Caco-2 (cell line): ENCODE measurements at regions of chr5 and their contacts with region 1.

Region 1: GRCh38 chr5:40904205-40904993 is 4.9 kb upstream of the C7 start:
- DNase-seq: peak; percentile 57 to 61
- H3K4me3 ChIP-seq: no peak overlapping the region
- H3K4me3 Mint-ChIP-seq: no peak overlapping the region
- H3K27ac Mint-ChIP-seq: no peak overlapping the region
- H3K4me1 ChIP-seq: no peaks in the 10 kb centered on the region
- H3K4me1 Mint-ChIP-seq: peaks cover 9% of the 10 kb centered on the region
- H3K27me3 ChIP-seq: no peaks in the 10 kb centered on the region
- H3K27me3 Mint-ChIP-seq: peaks cover 5% of the 10 kb centered on the region
- CTCF ChIP-seq: peak; percentile 80 to 97

Region 2: DNA sequence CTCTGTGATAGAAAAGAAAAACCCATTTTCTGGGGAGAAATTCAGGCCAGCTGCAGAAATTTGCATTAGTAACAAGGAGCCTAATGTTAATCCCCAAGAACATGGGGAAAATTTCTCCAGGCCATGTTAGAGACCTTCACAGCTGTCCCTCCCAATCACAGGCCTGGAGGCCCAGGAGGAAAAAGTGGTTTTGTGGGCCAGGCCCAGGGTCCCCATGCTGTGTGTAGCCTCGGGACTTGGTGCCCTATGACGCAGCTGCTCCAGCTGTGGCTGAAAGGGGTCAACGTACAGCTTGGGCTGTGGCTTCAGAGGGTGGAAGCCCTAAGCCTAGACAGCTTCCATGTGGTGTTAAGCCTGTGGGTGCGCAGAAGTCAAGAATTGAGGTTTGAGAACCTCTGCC is 22.1 kb before region 1 on chr5:
- CTCF ChIA-PET with region 1: no interaction called
- POLR2A ChIA-PET with region 1: no interaction called
- intact Hi-C with region 1: no loop called
- DNase-seq: no peak
- H3K4me3 ChIP-seq: no peak overlapping the region
- H3K4me3 Mint-ChIP-seq: no peak overlapping the region
- H3K27ac Mint-ChIP-seq: no peak overlapping the region
- H3K4me1 ChIP-seq: no peaks in the 10 kb centered on the region
- H3K4me1 Mint-ChIP-seq: no peaks in the 10 kb centered on the region
- H3K27me3 ChIP-seq: no peaks in the 10 kb centered on the region
- H3K27me3 Mint-ChIP-seq: no peaks in the 10 kb centered on the region
- CTCF ChIP-seq: no peak

Region 3: DNA sequence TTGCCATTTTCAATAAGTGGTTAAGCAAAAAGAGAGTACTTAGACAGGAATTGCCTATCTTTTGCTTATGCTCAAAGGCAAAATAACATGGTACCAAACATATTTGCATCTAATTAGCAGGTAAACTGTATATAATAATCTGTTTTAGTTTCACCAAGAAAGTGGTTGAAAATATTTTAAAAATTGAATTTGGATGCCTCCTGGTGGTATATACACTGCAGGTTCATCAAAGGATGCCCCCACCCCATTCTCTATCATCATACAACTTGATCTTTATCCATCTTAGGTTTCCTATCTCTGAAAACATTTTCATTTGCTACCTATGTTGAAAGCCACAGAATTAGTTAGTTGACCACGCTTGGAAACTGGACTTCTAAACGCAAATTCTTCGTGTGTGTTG is 213.8 kb after region 1 on chr5:
- CTCF ChIA-PET with region 1: interaction called, 6 read pairs
- POLR2A ChIA-PET with region 1: no interaction called
- intact Hi-C with region 1: loop called (anchors 1 kb)
- DNase-seq: no peak
- H3K4me3 ChIP-seq: no peak overlapping the region
- H3K4me3 Mint-ChIP-seq: no peak overlapping the region
- H3K27ac Mint-ChIP-seq: no peak overlapping the region
- H3K4me1 ChIP-seq: no peaks in the 10 kb centered on the region
- H3K4me1 Mint-ChIP-seq: no peaks in the 10 kb centered on the region
- H3K27me3 ChIP-seq: no peaks in the 10 kb centered on the region
- H3K27me3 Mint-ChIP-seq: peaks cover 3% of the 10 kb centered on the region
- CTCF ChIP-seq: no peak

Region 4: GRCh38 chr5:41334758-41335157 is 430.4 kb after region 1 on chr5:
- CTCF ChIA-PET with region 1: no interaction called
- POLR2A ChIA-PET with region 1: no interaction called
- intact Hi-C with region 1: loop called (anchors 5 kb)
- DNase-seq: no peak
- H3K4me3 ChIP-seq: no peak overlapping the region
- H3K4me3 Mint-ChIP-seq: no peak overlapping the region
- H3K27ac Mint-ChIP-seq: no peak overlapping the region
- H3K4me1 ChIP-seq: no peaks in the 10 kb centered on the region
- H3K4me1 Mint-ChIP-seq: no peaks in the 10 kb centered on the region
- H3K27me3 ChIP-seq: no peaks in the 10 kb centered on the region
- H3K27me3 Mint-ChIP-seq: no peaks in the 10 kb centered on the region
- CTCF ChIP-seq: no peak

Region 5: GRCh38 chr5:41637869-41638268 is 733.5 kb after region 1 on chr5:
- CTCF ChIA-PET with region 1: interaction called, 5 read pairs
- POLR2A ChIA-PET with region 1: no interaction called
- intact Hi-C with region 1: loop called (anchors 1 kb)
- DNase-seq: no peak
- H3K4me3 ChIP-seq: no peak overlapping the region
- H3K4me3 Mint-ChIP-seq: no peak overlapping the region
- H3K27ac Mint-ChIP-seq: peak overlapping the region; percentile 7
- H3K4me1 ChIP-seq: peaks cover 32% of the 10 kb centered on the region
- H3K4me1 Mint-ChIP-seq: peaks cover 13% of the 10 kb centered on the region
- H3K27me3 ChIP-seq: no peaks in the 10 kb centered on the region
- H3K27me3 Mint-ChIP-seq: no peaks in the 10 kb centered on the region
- CTCF ChIP-seq: peak in 1 of 2 experiments; percentile 15